CD4-positive, alpha-beta T cell (primary cell): ENCODE measurements at regions of chr15 and their contacts with region 1.

Region 1: GRCh38 chr15:81274931-81275707 is 48.8 kb downstream of the STARD5 start:
- DNase-seq: peak; percentile 53 to 93 (median 79)
- ATAC-seq: peak; percentile 96
- H3K4me3 ChIP-seq: no peak overlapping the region
- H3K4me3 Mint-ChIP-seq: peak overlapping the region; percentile 62
- H3K27ac ChIP-seq: no peak overlapping the region
- H3K27ac Mint-ChIP-seq: peak overlapping the region; percentile 82
- H3K4me1 ChIP-seq: peaks cover 19% of the 10 kb centered on the region
- H3K4me1 Mint-ChIP-seq: peaks cover 55% of the 10 kb centered on the region
- H3K27me3 ChIP-seq: no peaks in the 10 kb centered on the region
- H3K27me3 Mint-ChIP-seq: no peaks in the 10 kb centered on the region
- CTCF ChIP-seq: peak; percentile 74

Region 2: DNA sequence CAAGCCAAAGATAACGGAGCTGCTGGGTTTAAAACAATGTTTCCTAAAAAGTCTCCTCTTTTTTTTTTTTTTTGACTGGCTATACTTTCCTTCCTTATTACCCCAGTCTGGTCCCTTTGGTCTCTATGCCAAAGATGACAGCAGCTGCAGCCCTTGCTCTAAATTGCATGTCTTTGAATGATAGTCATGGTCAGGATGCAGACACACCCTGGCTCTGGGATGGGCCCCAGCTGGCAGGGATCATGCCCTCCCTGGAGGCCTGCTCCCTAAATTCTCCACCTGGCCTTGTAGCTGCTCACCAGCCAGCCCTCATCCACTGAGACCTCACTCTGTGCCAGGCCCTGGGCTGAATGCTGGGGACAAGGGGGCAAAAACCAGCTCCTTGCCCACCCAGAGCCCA is 381.3 kb before region 1 on chr15:
- CTCF ChIA-PET with region 1: no interaction called
- POLR2A ChIA-PET with region 1: no interaction called
- intact Hi-C with region 1: no loop called
- DNase-seq: no peak
- ATAC-seq: no peak
- H3K4me3 ChIP-seq: no peak overlapping the region
- H3K4me3 Mint-ChIP-seq: no peak overlapping the region
- H3K27ac ChIP-seq: no peak overlapping the region
- H3K27ac Mint-ChIP-seq: no peak overlapping the region
- H3K4me1 ChIP-seq: no peaks in the 10 kb centered on the region
- H3K4me1 Mint-ChIP-seq: peaks cover 17% of the 10 kb centered on the region
- H3K27me3 ChIP-seq: no peaks in the 10 kb centered on the region
- H3K27me3 Mint-ChIP-seq: no peaks in the 10 kb centered on the region
- CTCF ChIP-seq: no peak

Region 3: DNA sequence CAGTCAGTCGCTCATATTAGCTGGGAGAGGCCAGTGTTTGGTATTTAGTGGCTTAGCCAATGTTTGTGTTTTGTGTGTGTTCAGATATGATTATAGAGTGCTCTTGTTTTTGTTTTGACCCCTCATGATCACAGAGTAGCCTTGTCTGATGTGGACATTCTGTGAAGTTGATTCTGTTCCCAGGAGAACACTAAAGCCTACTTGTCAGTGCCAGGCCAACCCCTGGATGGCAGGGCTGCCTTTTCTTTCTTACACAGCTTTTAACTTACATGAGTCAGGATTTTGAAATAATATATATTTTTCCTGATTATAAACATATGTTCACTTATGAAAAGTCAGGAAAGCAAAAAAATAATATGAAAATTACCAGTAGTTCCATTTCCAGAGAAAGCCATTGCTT is 129.1 kb before region 1 on chr15:
- CTCF ChIA-PET with region 1: no interaction called
- POLR2A ChIA-PET with region 1: no interaction called
- intact Hi-C with region 1: no loop called
- DNase-seq: no peak
- ATAC-seq: no peak
- H3K4me3 ChIP-seq: no peak overlapping the region
- H3K4me3 Mint-ChIP-seq: no peak overlapping the region
- H3K27ac ChIP-seq: no peak overlapping the region
- H3K27ac Mint-ChIP-seq: no peak overlapping the region
- H3K4me1 ChIP-seq: no peaks in the 10 kb centered on the region
- H3K4me1 Mint-ChIP-seq: no peaks in the 10 kb centered on the region
- H3K27me3 ChIP-seq: peaks cover 0 to 4% of the 10 kb centered on the region in 2 experiments
- H3K27me3 Mint-ChIP-seq: peaks cover 20% of the 10 kb centered on the region
- CTCF ChIP-seq: no peak

Region 4: GRCh38 chr15:81286621-81287121 is 11.6 kb after region 1 on chr15:
- CTCF ChIA-PET with region 1: interaction called, 57 read pairs
- POLR2A ChIA-PET with region 1: interaction called, 396 read pairs
- intact Hi-C with region 1: no loop called
- DNase-seq: peak in 3 of 14 experiments; percentile 65 to 68 (median 68)
- ATAC-seq: peak; percentile 94
- H3K4me3 ChIP-seq: peak overlapping the region; percentile 5
- H3K4me3 Mint-ChIP-seq: peak overlapping the region; percentile 45
- H3K27ac ChIP-seq: peak overlapping the region; percentile 80 to 84
- H3K27ac Mint-ChIP-seq: peak overlapping the region; percentile 92
- H3K4me1 ChIP-seq: peaks cover 71% of the 10 kb centered on the region
- H3K4me1 Mint-ChIP-seq: peaks cover 79% of the 10 kb centered on the region
- H3K27me3 ChIP-seq: no peaks in the 10 kb centered on the region
- H3K27me3 Mint-ChIP-seq: no peaks in the 10 kb centered on the region
- CTCF ChIP-seq: no peak

Region 5: GRCh38 chr15:81301815-81302399 is 26.8 kb after region 1 on chr15:
- CTCF ChIA-PET with region 1: interaction called, 57 read pairs
- POLR2A ChIA-PET with region 1: interaction called, 396 read pairs
- intact Hi-C with region 1: loop called (anchors 2 kb)
- DNase-seq: peak in 4 of 14 experiments; percentile 21 to 61 (median 60)
- ATAC-seq: no peak
- H3K4me3 ChIP-seq: peak overlapping the region; percentile 96
- H3K4me3 Mint-ChIP-seq: peak overlapping the region; percentile 99
- H3K27ac ChIP-seq: peak overlapping the region; percentile 61 to 95
- H3K27ac Mint-ChIP-seq: peak overlapping the region; percentile 92
- H3K4me1 ChIP-seq: peaks cover 71% of the 10 kb centered on the region
- H3K4me1 Mint-ChIP-seq: peaks cover 66% of the 10 kb centered on the region
- H3K27me3 ChIP-seq: no peaks in the 10 kb centered on the region
- H3K27me3 Mint-ChIP-seq: no peaks in the 10 kb centered on the region
- CTCF ChIP-seq: no peak

Region 6: GRCh38 chr15:81336568-81336967 is 61.4 kb after region 1 on chr15:
- CTCF ChIA-PET with region 1: interaction called, 21 read pairs
- POLR2A ChIA-PET with region 1: interaction called, 3 read pairs
- intact Hi-C with region 1: loop called (anchors 1 kb)
- DNase-seq: peak in 11 of 14 experiments; percentile 23 to 71 (median 50)
- ATAC-seq: no peak
- H3K4me3 ChIP-seq: no peak overlapping the region
- H3K4me3 Mint-ChIP-seq: no peak overlapping the region
- H3K27ac ChIP-seq: no peak overlapping the region
- H3K27ac Mint-ChIP-seq: no peak overlapping the region
- H3K4me1 ChIP-seq: no peaks in the 10 kb centered on the region
- H3K4me1 Mint-ChIP-seq: peaks cover 13% of the 10 kb centered on the region
- H3K27me3 ChIP-seq: no peaks in the 10 kb centered on the region
- H3K27me3 Mint-ChIP-seq: no peaks in the 10 kb centered on the region
- CTCF ChIP-seq: peak; percentile 71

Region 7: DNA sequence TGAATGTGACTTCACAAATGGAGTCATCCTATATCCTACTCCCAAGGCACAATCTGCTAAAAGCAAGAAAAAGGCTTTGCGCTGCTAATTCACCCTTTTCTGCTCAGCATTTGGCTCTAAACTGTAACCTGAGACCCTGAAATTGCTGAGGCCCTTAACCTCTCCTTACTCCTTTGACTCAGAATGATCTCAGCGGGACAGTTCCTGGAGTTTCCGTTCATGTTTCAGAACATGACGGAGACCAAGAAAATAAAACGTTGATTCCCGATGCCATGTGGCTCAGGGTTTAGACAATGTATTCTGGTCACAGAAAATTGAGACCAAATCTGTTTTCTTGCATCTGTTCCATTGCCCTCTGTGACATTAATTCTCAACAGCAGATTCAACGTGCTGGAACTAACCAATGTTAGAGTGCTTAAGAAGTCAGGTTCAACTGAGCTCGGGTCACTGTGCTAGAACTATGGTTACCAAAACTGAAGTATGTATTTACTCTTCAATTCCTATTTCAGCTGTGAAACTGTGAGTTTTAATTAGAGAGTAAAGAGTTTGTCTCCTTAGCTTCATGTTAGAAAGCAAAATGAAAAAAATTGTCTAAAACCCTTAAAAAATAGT is 144.3 kb after region 1 on chr15:
- CTCF ChIA-PET with region 1: no interaction called
- POLR2A ChIA-PET with region 1: no interaction called
- intact Hi-C with region 1: no loop called
- DNase-seq: no peak
- ATAC-seq: no peak
- H3K4me3 ChIP-seq: no peak overlapping the region
- H3K4me3 Mint-ChIP-seq: no peak overlapping the region
- H3K27ac ChIP-seq: no peak overlapping the region
- H3K27ac Mint-ChIP-seq: no peak overlapping the region
- H3K4me1 ChIP-seq: peaks cover 8% of the 10 kb centered on the region
- H3K4me1 Mint-ChIP-seq: peaks cover 18% of the 10 kb centered on the region
- H3K27me3 ChIP-seq: no peaks in the 10 kb centered on the region
- H3K27me3 Mint-ChIP-seq: no peaks in the 10 kb centered on the region
- CTCF ChIP-seq: no peak

Region 8: GRCh38 chr15:81473177-81473576 is 198.1 kb after region 1 on chr15:
- CTCF ChIA-PET with region 1: no interaction called
- POLR2A ChIA-PET with region 1: no interaction called
- intact Hi-C with region 1: loop called in 1 of 2 experiments (anchors 10 kb)
- DNase-seq: no peak
- ATAC-seq: no peak
- H3K4me3 ChIP-seq: no peak overlapping the region
- H3K4me3 Mint-ChIP-seq: no peak overlapping the region
- H3K27ac ChIP-seq: no peak overlapping the region
- H3K27ac Mint-ChIP-seq: no peak overlapping the region
- H3K4me1 ChIP-seq: no peaks in the 10 kb centered on the region
- H3K4me1 Mint-ChIP-seq: no peaks in the 10 kb centered on the region
- H3K27me3 ChIP-seq: peaks cover 0 to 3% of the 10 kb centered on the region in 2 experiments
- H3K27me3 Mint-ChIP-seq: peaks cover 20% of the 10 kb centered on the region
- CTCF ChIP-seq: no peak